ENCODE measurements at regions of chr2 and their contacts with region 1.

Region 1: DNA sequence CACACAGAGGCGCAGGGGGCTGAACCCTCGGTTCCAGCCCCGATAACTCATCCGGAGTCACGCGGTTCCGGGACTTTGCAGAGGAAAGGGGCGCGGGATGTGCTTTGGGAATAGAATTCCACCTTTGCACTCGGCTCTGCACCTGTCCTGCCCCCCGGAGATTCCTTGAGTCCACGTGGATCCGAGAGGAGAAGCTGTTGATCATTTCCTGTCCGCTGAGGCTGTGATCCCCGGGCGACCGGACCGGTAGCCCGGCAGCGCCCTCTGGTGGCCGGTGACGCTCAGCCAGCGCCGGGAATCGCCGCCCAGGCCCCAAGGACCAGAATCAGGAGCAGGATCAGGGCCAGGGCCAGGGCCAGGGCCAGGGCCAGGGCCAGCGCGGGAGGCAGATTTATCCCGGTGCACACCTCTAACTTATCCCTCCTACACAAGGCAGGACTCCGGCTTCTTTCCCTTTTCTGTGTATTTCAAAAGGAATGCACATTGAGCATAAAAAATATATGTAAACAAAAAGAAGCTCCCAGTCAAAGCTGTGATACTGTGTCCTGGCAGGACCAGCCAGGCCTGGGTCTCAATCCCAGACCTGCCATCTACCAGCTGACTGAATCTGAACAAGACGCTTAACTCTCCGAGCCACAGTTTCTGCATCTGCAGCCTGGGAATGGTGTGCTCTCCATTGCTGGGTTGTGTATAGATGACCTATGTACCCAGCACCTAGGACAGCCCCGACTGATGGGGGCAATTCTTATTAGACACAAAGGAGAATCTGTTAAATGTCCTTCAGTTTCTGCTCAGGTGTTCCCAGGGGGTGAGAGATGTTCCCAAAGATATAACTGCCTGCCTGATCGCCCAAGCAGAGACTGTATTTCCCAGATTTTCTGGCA is 8.5 kb upstream of the SPATA3 start:
- DNase-seq: peak; percentile 51 to 74 (median 68)
- H3K4me3 ChIP-seq: peak overlapping the region in 1 of 3 experiments; percentile 63
- H3K4me3 Mint-ChIP-seq: peak overlapping the region; percentile 50 to 63
- H3K27ac ChIP-seq: no peak overlapping the region
- H3K27ac Mint-ChIP-seq: no peak overlapping the region
- H3K4me1 ChIP-seq: peaks cover 6 to 7% of the 10 kb centered on the region in 2 donors
- H3K4me1 Mint-ChIP-seq: peaks cover 5% of the 10 kb centered on the region
- H3K27me3 ChIP-seq: peaks cover 3 to 16% of the 10 kb centered on the region in 2 donors
- H3K27me3 Mint-ChIP-seq: peaks cover 16 to 45% (median 25%) of the 10 kb centered on the region in 3 donors
- CTCF ChIP-seq: peak; percentile 90

Region 2: DNA sequence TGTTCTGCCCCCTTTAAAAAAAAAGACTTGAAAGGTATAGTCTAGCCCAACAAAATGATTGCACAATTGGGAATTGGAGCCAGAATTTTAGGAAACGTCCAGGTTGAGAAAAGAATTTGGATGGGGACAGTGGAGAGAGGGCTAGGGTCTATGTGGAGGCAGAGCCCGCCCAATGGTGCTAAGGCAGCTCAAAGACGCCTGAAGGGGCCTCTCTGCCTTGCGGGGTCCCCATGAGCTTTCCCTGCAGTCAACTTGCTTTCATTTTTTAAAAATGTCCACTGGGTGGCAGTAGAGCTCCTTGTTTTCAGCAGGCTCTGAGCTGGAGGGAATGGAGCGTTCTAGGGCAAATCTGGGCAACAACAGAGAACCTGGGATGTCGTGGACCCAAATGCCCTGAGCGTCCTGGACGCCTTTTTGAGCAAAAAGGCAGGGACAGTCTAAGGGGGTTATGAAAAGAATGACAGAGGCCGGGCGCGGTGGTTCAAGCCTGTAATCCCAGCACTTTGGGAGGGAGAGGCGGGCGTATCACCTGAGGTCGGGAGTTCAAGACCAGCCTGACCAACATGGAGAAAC is 162.9 kb before region 1 on chr2:
- intact Hi-C with region 1: loop called (anchors 2 to 5 kb)
- DNase-seq: peak; percentile 54 to 65 (median 60)
- H3K4me3 ChIP-seq: peak overlapping the region in 1 of 3 experiments; percentile 63
- H3K4me3 Mint-ChIP-seq: peak overlapping the region; percentile 61 to 82
- H3K27ac ChIP-seq: no peak overlapping the region
- H3K27ac Mint-ChIP-seq: peak overlapping the region in 1 of 7 donors; percentile 50
- H3K4me1 ChIP-seq: peaks cover 7 to 18% of the 10 kb centered on the region in 2 donors
- H3K4me1 Mint-ChIP-seq: peaks cover 18% of the 10 kb centered on the region
- H3K27me3 ChIP-seq: peaks cover 0 to 21% of the 10 kb centered on the region in 2 donors
- H3K27me3 Mint-ChIP-seq: peaks cover 18 to 35% (median 25%) of the 10 kb centered on the region in 3 donors
- CTCF ChIP-seq: peak; percentile 76

Region 3: DNA sequence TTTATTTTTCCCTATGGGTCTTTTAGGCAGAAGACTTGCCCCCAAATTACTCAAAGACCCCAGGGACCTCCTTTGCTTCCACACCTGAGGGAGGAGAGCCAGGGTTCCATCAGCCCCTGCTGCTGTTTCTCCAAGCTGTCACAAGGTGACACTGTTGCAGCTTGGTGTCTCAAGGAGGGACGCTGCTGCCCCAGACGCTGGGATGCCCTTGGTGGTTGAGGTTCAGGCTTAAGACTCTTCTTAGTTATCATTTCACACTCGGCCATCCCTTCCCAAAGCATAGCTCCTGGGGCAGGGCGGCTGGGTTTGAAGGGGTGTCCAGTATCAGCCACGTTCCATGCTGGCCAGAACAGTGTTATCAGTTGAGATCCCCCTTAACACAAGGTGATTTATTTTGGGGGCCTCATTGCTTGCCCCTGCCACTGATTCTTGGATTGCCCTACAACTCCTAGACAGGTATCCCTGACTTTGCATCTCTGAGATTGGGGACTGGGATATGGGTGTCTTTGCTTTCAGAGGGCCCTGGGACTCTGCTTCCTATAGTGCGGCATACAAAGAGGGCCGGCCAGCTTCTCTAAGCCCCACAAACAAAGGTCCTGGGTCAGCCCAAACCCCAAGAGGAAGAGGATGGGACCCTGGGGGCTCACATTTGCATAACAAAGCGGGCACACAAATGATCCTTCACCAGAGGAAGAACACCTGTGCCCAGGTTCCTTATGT is 85.0 kb before region 1 on chr2:
- intact Hi-C with region 1: loop called (anchors 1 to 2 kb)
- DNase-seq: peak in 2 of 3 donors; percentile 14 to 44
- H3K4me3 ChIP-seq: no peak overlapping the region
- H3K4me3 Mint-ChIP-seq: no peak overlapping the region
- H3K27ac ChIP-seq: no peak overlapping the region
- H3K27ac Mint-ChIP-seq: no peak overlapping the region
- H3K4me1 ChIP-seq: no peaks in the 10 kb centered on the region
- H3K4me1 Mint-ChIP-seq: no peaks in the 10 kb centered on the region
- H3K27me3 ChIP-seq: no peaks in the 10 kb centered on the region
- H3K27me3 Mint-ChIP-seq: peaks cover 1 to 6% (median 2%) of the 10 kb centered on the region in 3 donors
- CTCF ChIP-seq: peak; percentile 96

Region 4: GRCh38 chr2:231037731-231038482 is 50.5 kb after region 1 on chr2:
- intact Hi-C with region 1: no loop called
- DNase-seq: no peak
- H3K4me3 ChIP-seq: no peak overlapping the region
- H3K4me3 Mint-ChIP-seq: peak overlapping the region in 1 of 2 donors; percentile 59
- H3K27ac ChIP-seq: no peak overlapping the region
- H3K27ac Mint-ChIP-seq: no peak overlapping the region
- H3K4me1 ChIP-seq: peaks cover 0 to 2% of the 10 kb centered on the region in 2 donors
- H3K4me1 Mint-ChIP-seq: peaks cover 4% of the 10 kb centered on the region
- H3K27me3 ChIP-seq: peaks cover 36 to 56% of the 10 kb centered on the region in 2 donors
- H3K27me3 Mint-ChIP-seq: peaks cover 52 to 75% (median 68%) of the 10 kb centered on the region in 3 donors
- CTCF ChIP-seq: no peak